Right ventricle myocardium inferior (tissue), 1 donor: ENCODE measurements at regions of chr16 and their contacts with region 1.

Region 1: GRCh38 chr16:74623214-74623842 is 16.4 kb upstream of the GLG1 start:
- DNase-seq: no peak
- ATAC-seq: no peak

Region 2: DNA sequence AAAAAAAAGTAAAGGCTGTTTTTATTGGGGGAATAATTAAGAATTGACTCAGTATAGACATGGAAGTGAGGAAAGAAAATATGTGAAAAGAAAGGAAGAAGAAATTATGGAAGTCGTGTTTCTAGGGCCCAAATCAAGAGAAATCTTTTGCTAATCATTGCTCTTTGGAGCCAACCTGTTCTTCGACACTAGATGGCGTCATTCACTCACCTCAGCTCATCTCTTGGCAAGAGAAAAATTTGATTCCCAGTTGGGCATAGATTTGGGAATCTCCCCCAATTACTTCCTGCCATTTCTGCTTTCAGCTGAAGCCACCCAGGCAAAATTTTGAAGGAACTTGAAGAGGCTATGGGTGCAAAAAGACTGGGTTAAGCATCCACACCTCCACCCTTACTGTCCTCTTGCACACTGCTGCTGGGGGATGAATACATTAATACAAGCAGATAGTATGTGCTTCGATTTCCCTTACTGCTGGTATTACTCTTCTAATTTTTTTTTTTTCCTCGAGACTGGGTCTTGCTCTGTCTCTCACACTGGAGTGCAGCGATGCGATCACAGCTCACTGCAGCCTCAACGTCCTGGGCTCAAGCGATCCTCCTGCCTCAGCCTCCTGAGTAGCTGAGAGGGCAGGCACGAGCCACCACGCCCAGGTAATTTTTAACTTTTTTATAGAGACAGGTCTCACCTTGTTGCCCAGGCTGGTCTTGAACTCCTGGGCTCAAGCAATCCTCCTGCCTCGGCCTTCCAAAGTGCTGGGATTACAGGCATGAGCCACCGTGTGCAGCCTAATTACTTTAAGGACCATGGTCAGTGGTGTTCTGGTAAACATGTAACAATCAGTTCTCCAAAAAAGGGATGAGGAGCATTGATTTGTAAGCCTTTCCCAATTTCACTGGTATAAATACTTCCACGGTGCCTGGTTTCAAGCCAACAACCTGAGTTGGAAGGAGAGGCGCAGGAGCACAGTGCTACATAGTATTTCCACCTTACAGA is 313.2 kb before region 1 on chr16:
- intact Hi-C with region 1: loop called (anchors 10 kb)
- DNase-seq: no peak
- ATAC-seq: no peak

Region 3: DNA sequence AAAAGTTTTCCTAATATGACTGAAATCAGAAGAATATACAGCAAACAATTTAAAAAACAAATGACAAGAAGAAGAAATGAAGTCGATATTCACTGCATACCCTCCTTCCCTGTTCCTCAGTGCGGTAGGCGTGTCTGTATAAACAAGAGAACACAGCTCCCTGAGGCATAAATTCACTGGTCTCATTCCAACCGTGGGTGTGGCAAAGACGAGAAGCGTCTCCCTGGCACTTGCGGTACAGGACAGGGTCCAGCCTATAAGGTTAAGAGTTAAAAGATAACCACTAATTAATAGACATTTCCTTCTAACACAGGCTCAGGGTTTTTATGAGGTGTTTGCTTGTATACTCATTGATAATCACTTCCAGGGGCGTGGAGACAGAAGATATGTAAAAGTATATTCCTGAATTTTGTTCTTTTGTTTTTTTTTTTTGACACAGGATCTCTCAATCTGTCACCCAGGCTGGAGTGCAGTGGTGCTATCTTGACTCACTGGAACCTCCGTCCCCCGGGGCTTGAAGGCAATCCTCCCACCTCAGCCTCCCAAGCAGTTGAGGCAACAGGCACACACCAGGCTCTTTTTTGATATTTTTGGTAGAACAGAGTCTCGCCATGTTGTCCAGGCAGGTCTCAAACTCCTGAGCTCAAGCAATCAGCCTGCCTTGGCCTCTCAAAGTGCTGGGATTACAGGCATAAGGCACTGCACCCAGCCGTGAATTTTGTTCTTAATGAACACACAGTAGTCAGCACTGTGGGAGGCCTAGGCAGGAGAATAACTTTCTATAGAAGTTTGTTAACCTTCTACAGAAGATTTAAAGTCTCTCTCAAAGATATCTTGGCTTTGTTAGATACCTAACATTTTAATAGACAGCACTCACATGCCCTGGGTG is 142.9 kb before region 1 on chr16:
- intact Hi-C with region 1: loop called (anchors 5 kb)
- DNase-seq: no peak
- ATAC-seq: peak; percentile 62